ENCODE measurements at regions of chr6 and their contacts with region 1.

Region 1: DNA sequence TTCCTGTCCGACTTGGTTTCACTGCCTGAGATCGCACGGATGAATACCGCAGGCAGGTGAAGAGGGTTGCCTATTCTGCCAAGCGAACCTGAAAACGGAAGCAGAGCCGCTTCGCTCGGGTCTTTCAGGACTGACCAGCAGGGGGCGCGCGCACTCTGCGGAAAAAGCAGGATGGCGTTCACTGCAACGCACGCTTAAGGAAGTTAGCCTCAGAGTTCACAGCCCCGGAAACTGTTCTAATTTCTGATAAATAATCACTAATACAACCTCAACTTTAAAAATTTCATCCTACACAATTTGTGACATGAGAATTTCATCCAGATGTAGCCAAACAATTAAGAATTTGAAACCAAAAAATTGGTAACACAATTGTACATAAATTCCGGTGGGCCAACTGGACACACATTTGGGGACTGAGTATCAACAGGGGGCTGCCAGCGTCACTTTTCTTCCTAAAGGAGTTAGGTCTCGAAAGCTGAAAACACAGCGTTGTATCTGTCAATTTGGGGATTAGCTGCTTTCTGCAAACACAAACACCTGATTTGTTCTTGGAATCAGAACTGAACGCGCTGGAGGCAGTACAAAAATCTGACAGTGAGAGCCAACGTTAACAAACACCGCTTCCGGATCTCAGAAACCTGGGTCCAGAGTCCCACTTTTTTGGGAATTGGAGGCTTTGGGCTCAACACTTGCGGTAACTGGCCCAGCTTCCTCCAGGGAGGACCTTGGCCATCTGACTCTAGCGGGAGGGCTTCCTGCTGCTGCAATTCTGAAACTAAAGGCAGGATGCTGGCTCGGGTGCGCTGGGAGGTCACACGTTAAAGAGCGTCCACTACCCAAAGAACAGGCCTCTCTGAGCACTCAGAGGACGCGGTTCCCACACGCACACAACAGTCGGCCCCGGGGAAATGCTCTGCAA is 8.8 kb downstream of the PXDC1 start:
- DNase-seq: no peak
- ATAC-seq: peak; percentile 80
- H3K4me3 ChIP-seq: peak overlapping the region; percentile 21 to 51
- H3K27ac ChIP-seq: peak overlapping the region; percentile 90
- H3K4me1 ChIP-seq: peaks cover 45% of the 10 kb centered on the region
- H3K27me3 ChIP-seq: no peaks in the 10 kb centered on the region
- CTCF ChIP-seq: peak; percentile 95

Region 2: DNA sequence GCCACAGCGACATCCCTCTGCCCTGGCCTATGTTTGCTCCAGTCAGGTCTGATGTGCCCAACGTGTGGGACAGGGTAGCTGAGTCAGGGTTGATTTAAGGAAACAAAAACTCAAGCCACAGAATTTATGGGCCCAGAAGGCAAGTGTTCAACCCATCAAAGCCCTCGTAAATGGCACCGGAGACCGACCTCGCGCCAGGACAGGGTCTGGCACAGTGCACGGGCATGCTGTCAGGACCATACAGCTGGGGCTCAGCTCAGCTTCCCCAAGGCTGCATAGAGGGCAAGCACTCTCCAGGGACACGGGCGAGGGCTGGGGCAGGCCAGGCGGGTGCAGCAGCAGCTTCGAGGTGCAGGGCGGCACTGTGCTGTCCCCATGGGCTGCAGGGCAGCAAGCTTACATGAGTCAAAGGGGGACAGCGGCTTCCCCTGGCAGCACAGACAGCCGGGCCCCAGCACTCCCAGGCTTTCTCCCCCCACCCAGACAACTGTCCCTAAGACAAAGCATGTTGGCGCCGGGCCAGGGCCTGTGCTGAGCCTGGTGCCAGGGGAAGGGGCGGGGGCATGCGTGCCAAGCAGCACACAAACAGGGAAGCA is 458.3 kb before region 1 on chr6:
- CTCF ChIA-PET with region 1: no interaction called
- POLR2A ChIA-PET with region 1: no interaction called
- in situ Hi-C with region 1: no loop called
- intact Hi-C with region 1: no loop called
- DNase-seq: no peak
- ATAC-seq: no peak
- H3K4me3 ChIP-seq: no peak overlapping the region
- H3K27ac ChIP-seq: no peak overlapping the region
- H3K4me1 ChIP-seq: no peaks in the 10 kb centered on the region
- H3K27me3 ChIP-seq: no peaks in the 10 kb centered on the region
- CTCF ChIP-seq: no peak

Region 3: DNA sequence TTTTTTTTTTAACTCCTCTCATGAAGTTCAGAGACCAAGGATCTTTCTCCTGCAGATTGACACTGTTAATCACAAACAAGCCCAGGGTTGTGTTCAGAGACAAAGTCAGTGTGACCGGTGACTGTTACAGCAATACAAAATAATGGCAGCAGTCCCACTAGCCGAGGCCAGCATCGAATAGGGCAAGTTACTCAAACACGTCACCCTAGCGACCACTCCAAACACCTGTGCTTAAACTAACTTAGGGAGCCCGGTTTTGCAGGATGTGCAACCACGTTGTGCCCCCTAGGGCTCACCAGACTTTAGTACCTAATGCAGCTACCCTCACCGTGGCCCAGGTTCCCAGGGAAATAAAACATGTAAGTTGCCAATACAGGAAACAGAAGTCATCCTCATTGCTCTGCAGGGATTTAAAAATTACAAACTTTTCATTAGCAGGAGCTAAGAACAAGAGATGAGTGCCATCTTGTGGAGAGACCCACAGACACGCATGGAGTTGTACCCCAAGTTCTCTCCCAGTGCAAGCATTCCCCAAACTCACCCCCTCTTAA is 144.5 kb after region 1 on chr6:
- CTCF ChIA-PET with region 1: no interaction called
- POLR2A ChIA-PET with region 1: no interaction called
- in situ Hi-C with region 1: no loop called
- intact Hi-C with region 1: loop called (anchors 2 kb)
- DNase-seq: no peak
- ATAC-seq: peak; percentile 28
- H3K4me3 ChIP-seq: no peak overlapping the region
- H3K27ac ChIP-seq: no peak overlapping the region
- H3K4me1 ChIP-seq: peaks cover 11% of the 10 kb centered on the region
- H3K27me3 ChIP-seq: no peaks in the 10 kb centered on the region
- CTCF ChIP-seq: peak; percentile 61

Region 4: DNA sequence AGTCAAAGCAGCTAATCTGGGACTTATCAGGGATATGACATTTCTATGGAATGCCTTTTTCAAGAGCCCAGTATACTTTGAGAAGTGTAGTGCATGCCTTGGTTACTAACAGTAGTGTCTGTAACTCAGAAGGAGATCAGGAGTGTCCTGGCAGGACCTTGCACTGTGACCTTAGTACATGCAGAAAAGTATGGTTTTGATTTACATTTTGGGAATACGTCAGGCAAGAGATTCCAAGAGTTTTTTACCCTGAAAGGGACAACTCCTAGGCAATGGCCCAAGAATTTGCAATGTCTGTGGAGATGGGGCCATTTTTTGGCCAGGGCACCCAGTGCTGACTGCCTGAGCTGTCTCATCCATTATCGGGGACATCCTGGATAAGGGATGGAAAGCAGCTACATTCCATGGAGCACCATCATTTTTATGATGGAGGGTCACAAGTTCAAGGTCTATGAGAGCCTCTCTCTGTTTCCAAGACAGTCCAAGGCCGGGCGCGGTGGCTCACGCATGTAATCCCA is 186.7 kb after region 1 on chr6:
- CTCF ChIA-PET with region 1: interaction called, 8 read pairs
- POLR2A ChIA-PET with region 1: no interaction called
- in situ Hi-C with region 1: no loop called
- intact Hi-C with region 1: loop called (anchors 1 kb)
- DNase-seq: no peak
- ATAC-seq: no peak
- H3K4me3 ChIP-seq: no peak overlapping the region
- H3K27ac ChIP-seq: no peak overlapping the region
- H3K4me1 ChIP-seq: 0 out of 2 replicates have a peak, but pooled peaks cover 3% of the 10 kb centered on the region
- H3K27me3 ChIP-seq: no peaks in the 10 kb centered on the region
- CTCF ChIP-seq: no peak

Region 5: GRCh38 chr6:3977875-3978711 is 235.4 kb after region 1 on chr6:
- CTCF ChIA-PET with region 1: interaction called, 3 read pairs
- POLR2A ChIA-PET with region 1: no interaction called
- in situ Hi-C with region 1: no loop called
- intact Hi-C with region 1: loop called (anchors 2 kb)
- DNase-seq: peak; percentile 50
- ATAC-seq: peak; percentile 98
- H3K4me3 ChIP-seq: no peak overlapping the region
- H3K27ac ChIP-seq: no peak overlapping the region
- H3K4me1 ChIP-seq: no peaks in the 10 kb centered on the region
- H3K27me3 ChIP-seq: no peaks in the 10 kb centered on the region
- CTCF ChIP-seq: peak; percentile 81

Region 6: GRCh38 chr6:3990692-3991501 is 248.2 kb after region 1 on chr6:
- CTCF ChIA-PET with region 1: interaction called, 5 read pairs
- POLR2A ChIA-PET with region 1: no interaction called
- in situ Hi-C with region 1: no loop called
- intact Hi-C with region 1: loop called (anchors 2 kb)
- DNase-seq: peak; percentile 52
- ATAC-seq: peak; percentile 95
- H3K4me3 ChIP-seq: peak overlapping the region; percentile 20 to 48; a peak in 3 of 4 replicates
- H3K27ac ChIP-seq: peak overlapping the region; percentile 49
- H3K4me1 ChIP-seq: no peaks in the 10 kb centered on the region
- H3K27me3 ChIP-seq: no peaks in the 10 kb centered on the region
- CTCF ChIP-seq: peak; percentile 95

Region 7: DNA sequence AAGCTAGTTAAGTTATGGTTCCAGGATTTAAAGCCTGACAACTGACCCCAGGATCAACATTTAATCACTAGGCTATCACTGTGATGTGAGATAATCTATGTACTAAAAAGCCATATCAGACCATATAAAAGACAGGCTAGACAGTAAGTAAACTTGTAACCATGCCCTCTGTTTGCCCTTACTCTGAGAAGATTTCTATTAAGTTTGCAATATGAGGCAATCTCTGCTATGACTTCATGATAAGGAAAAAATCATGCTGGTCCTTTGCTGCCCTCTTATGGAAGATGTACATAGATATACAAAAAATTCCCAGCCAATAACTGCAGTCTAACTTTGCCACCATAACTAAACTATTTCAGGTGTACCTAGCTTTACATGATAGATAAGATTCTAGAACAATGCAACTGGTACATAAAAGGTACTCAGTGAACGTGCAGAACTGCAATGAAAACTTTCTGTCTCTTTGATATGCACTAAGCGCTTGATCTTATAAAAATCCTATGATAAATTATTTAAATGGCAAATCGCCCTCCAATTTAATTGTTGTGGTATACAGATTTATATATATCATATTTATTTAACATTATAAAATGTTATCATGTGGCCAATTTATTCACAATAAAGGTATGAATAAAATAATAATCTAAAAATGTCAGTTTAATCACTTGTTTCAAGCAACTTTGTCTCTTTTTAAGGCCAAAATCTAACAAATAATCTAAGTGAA is 265.8 kb after region 1 on chr6:
- CTCF ChIA-PET with region 1: interaction called, 4 read pairs
- POLR2A ChIA-PET with region 1: no interaction called
- in situ Hi-C with region 1: no loop called
- intact Hi-C with region 1: loop called (anchors 5 kb)
- DNase-seq: no peak
- ATAC-seq: peak; percentile 79
- H3K4me3 ChIP-seq: no peak overlapping the region
- H3K27ac ChIP-seq: peak overlapping the region; percentile 75; the same call in 1 of the 2 replicates
- H3K4me1 ChIP-seq: peaks cover 29% of the 10 kb centered on the region
- H3K27me3 ChIP-seq: no peaks in the 10 kb centered on the region
- CTCF ChIP-seq: peak; percentile 68; the same call in 1 of the 2 replicates